B cell (primary cell): ENCODE measurements at regions of chr18 and their contacts with region 1.

Region 1: DNA sequence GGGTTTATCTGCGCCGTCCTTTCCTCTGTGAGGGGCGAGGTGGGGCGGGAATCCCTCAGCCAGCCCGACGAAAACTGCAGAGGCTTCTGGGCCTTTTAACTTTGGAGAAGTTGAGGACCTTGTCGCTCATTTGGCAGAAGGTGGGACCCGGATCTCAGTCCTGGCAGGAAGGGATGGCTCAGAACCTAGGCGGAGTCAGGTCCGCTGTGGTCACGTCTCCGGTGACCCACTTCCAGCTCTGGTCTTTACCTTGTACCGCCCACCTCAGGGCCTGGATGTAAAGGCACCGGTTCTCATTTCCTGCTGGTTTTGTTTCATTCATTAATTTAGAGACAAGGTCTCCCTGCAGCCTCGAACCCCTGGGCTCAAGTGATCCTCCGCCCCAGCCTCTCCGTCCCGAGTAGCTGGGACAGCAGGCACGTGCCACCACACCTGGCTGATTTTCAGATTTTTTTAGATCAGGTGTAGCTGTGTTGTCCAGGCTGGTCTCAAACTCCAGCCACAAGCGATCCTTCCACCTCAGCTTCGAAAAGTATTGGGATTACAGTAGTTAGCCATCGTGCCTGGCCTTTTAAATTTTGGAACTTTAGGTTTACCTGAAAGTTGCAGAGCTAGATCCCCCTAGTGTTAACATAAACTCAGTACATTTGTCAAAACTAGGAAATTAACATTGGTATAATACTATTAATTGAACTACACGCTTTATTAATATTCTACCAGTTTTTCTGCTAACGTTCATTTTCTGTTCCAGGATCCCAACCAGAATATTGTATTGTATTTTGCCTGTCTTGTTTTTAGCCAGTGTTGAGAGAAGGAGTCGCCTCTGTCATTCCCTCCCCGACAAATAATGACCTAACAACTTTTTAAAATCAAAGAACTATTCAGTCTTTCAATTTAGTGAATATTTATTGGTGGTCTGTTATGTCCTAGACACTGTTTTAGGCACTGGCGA is 852 bp downstream of the POLI start:
- DNase-seq: peak; percentile 67
- ATAC-seq: peak; percentile 31
- H3K4me3 ChIP-seq: peak overlapping the region; percentile 74 to 89 (median 81)
- H3K4me3 Mint-ChIP-seq: peak overlapping the region; percentile 97
- H3K27ac ChIP-seq: peak overlapping the region; percentile 84 to 90
- H3K27ac Mint-ChIP-seq: peak overlapping the region; percentile 99
- H3K4me1 ChIP-seq: peaks cover 16 to 28% of the 10 kb centered on the region in 2 donors
- H3K4me1 Mint-ChIP-seq: peaks cover 31% of the 10 kb centered on the region
- H3K27me3 ChIP-seq: no peaks in the 10 kb centered on the region
- H3K27me3 Mint-ChIP-seq: no peaks in the 10 kb centered on the region
- CTCF ChIP-seq: peak; percentile 73

Region 2: GRCh38 chr18:53114441-53114840 is 1155.7 kb before region 1 on chr18:
- CTCF ChIA-PET with region 1: no interaction called
- POLR2A ChIA-PET with region 1: no interaction called
- intact Hi-C with region 1: no loop called
- DNase-seq: no peak
- ATAC-seq: no peak
- H3K4me3 ChIP-seq: no peak overlapping the region
- H3K4me3 Mint-ChIP-seq: no peak overlapping the region
- H3K27ac ChIP-seq: no peak overlapping the region
- H3K27ac Mint-ChIP-seq: no peak overlapping the region
- H3K4me1 ChIP-seq: no peaks in the 10 kb centered on the region
- H3K4me1 Mint-ChIP-seq: no peaks in the 10 kb centered on the region
- H3K27me3 ChIP-seq: no peaks in the 10 kb centered on the region
- H3K27me3 Mint-ChIP-seq: no peaks in the 10 kb centered on the region
- CTCF ChIP-seq: no peak

Region 3: GRCh38 chr18:54209471-54210180 is 60.5 kb before region 1 on chr18:
- CTCF ChIA-PET with region 1: interaction called, 12 read pairs
- POLR2A ChIA-PET with region 1: no interaction called
- intact Hi-C with region 1: no loop called
- DNase-seq: peak; percentile 18
- ATAC-seq: peak; percentile 43
- H3K4me3 ChIP-seq: no peak overlapping the region
- H3K4me3 Mint-ChIP-seq: peak overlapping the region; percentile 63
- H3K27ac ChIP-seq: peak overlapping the region in 1 of 2 donors; percentile 47
- H3K27ac Mint-ChIP-seq: peak overlapping the region; percentile 69
- H3K4me1 ChIP-seq: peaks cover 25 to 30% of the 10 kb centered on the region in 2 donors
- H3K4me1 Mint-ChIP-seq: peaks cover 56% of the 10 kb centered on the region
- H3K27me3 ChIP-seq: no peaks in the 10 kb centered on the region
- H3K27me3 Mint-ChIP-seq: no peaks in the 10 kb centered on the region
- CTCF ChIP-seq: no peak

Region 4: GRCh38 chr18:54217624-54218023 is 52.5 kb before region 1 on chr18:
- CTCF ChIA-PET with region 1: interaction called, 112 read pairs
- POLR2A ChIA-PET with region 1: interaction called, 11 read pairs
- intact Hi-C with region 1: no loop called
- DNase-seq: peak; percentile 33
- ATAC-seq: no peak
- H3K4me3 ChIP-seq: peak overlapping the region in 3 of 5 experiments; percentile 2 to 7 (median 4)
- H3K4me3 Mint-ChIP-seq: peak overlapping the region; percentile 78
- H3K27ac ChIP-seq: peak overlapping the region in 1 of 2 donors; percentile 64
- H3K27ac Mint-ChIP-seq: peak overlapping the region; percentile 56
- H3K4me1 ChIP-seq: peaks cover 61 to 69% of the 10 kb centered on the region in 2 donors
- H3K4me1 Mint-ChIP-seq: peaks cover 72% of the 10 kb centered on the region
- H3K27me3 ChIP-seq: no peaks in the 10 kb centered on the region
- H3K27me3 Mint-ChIP-seq: no peaks in the 10 kb centered on the region
- CTCF ChIP-seq: no peak

Region 5: DNA sequence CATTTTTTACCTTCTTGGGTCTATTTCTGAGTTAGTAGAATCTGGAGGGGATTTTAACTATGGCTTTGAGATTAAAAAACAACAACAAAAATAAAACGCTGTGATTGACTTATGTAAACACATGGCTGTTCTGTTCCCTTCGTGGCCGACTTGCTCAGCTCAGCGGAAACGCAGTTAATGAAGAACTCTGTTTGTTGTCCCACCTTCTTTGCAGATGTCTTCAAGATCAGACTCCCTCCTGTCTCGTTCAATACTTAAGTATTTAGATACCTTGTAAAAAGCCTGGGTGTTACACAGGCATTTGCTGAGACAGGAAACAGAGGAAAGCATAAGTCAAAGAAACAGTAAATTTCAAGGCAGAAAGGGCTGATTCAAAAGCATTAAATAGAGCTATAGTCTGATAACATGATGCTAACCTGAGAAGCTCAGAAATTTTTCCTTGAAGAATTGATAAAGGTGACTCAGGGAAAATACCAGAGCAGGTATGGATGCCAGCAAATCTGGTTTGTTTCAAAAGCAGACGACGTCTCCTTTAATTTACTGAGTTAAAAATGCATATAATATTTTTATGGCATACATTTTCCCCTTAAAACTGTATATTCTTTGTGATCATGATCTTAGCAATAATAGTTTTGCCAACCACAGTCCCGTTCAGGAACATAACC is 22.5 kb before region 1 on chr18:
- CTCF ChIA-PET with region 1: interaction called, 22 read pairs
- POLR2A ChIA-PET with region 1: interaction called, 7 read pairs
- intact Hi-C with region 1: loop called (anchors 1 kb)
- DNase-seq: no peak
- ATAC-seq: no peak
- H3K4me3 ChIP-seq: peak overlapping the region in 2 of 5 experiments; percentile 1 to 4
- H3K4me3 Mint-ChIP-seq: peak overlapping the region; percentile 60
- H3K27ac ChIP-seq: peak overlapping the region; percentile 70 to 76
- H3K27ac Mint-ChIP-seq: peak overlapping the region; percentile 93
- H3K4me1 ChIP-seq: peaks cover 39 to 44% of the 10 kb centered on the region in 2 donors
- H3K4me1 Mint-ChIP-seq: peaks cover 42% of the 10 kb centered on the region
- H3K27me3 ChIP-seq: no peaks in the 10 kb centered on the region
- H3K27me3 Mint-ChIP-seq: no peaks in the 10 kb centered on the region
- CTCF ChIP-seq: no peak

Region 6: GRCh38 chr18:54357660-54358494 is 87.7 kb after region 1 on chr18 and contains the starts of genes C18orf54 and STARD6:
- CTCF ChIA-PET with region 1: interaction called, 26 read pairs
- POLR2A ChIA-PET with region 1: interaction called, 4 read pairs
- intact Hi-C with region 1: loop called (anchors 1 kb)
- DNase-seq: peak; percentile 95
- ATAC-seq: peak; percentile 92
- H3K4me3 ChIP-seq: peak within 1 kb of the TSS; percentile 75 to 99 (median 82)
- H3K4me3 Mint-ChIP-seq: peak within 1 kb of the TSS; percentile 92
- H3K27ac ChIP-seq: peak within 1 kb of the TSS; percentile 53 to 80
- H3K27ac Mint-ChIP-seq: peak within 1 kb of the TSS; percentile 82
- H3K4me1 ChIP-seq: peaks cover 8 to 9% of the 10 kb centered on the region in 2 donors
- H3K4me1 Mint-ChIP-seq: peaks cover 17% of the 10 kb centered on the region
- H3K27me3 ChIP-seq: no peaks in the 10 kb centered on the region
- H3K27me3 Mint-ChIP-seq: no peaks in the 10 kb centered on the region
- CTCF ChIP-seq: peak; percentile 66
- total RNA-seq, gene C18orf54: 4.7 and 4.8 TPM in 2 replicates
- total RNA-seq, gene STARD6: not detected in 2 replicates

Region 7: DNA sequence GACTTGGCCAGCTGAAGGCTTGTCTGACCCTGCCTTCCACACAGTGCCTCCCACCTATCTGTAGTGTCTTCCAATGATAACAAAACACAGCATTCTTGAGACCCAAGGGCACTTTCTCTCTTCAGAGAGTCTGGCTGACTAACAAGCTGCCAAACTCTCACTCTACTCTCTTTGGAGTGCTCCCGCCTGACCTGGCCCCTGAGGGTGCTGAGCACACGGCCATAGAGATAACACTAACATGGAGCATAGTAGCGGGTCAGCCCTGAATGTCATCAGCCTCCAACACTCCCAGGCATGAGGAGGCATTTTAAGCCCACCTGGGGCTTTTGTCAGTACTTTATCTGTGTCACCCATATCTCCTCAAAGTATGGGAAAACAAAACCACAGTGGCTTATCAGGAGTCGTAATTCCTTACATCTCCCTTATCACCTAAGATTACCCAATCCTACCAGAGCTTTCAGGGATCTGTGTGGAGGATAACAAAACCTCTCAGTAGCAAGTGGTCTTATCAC is 1478.1 kb after region 1 on chr18:
- CTCF ChIA-PET with region 1: no interaction called
- POLR2A ChIA-PET with region 1: no interaction called
- intact Hi-C with region 1: no loop called
- DNase-seq: no peak
- ATAC-seq: no peak
- H3K4me3 ChIP-seq: no peak overlapping the region
- H3K4me3 Mint-ChIP-seq: no peak overlapping the region
- H3K27ac ChIP-seq: no peak overlapping the region
- H3K27ac Mint-ChIP-seq: no peak overlapping the region
- H3K4me1 ChIP-seq: no peaks in the 10 kb centered on the region
- H3K4me1 Mint-ChIP-seq: no peaks in the 10 kb centered on the region
- H3K27me3 ChIP-seq: no peaks in the 10 kb centered on the region
- H3K27me3 Mint-ChIP-seq: no peaks in the 10 kb centered on the region
- CTCF ChIP-seq: no peak